Activated naive CD4-positive, alpha-beta T cell treated with anti-CD3 and anti-CD28 coated beads for 36 hours (primary cell): ENCODE measurements at regions of chr14 and their contacts with region 1.

Region 1: DNA sequence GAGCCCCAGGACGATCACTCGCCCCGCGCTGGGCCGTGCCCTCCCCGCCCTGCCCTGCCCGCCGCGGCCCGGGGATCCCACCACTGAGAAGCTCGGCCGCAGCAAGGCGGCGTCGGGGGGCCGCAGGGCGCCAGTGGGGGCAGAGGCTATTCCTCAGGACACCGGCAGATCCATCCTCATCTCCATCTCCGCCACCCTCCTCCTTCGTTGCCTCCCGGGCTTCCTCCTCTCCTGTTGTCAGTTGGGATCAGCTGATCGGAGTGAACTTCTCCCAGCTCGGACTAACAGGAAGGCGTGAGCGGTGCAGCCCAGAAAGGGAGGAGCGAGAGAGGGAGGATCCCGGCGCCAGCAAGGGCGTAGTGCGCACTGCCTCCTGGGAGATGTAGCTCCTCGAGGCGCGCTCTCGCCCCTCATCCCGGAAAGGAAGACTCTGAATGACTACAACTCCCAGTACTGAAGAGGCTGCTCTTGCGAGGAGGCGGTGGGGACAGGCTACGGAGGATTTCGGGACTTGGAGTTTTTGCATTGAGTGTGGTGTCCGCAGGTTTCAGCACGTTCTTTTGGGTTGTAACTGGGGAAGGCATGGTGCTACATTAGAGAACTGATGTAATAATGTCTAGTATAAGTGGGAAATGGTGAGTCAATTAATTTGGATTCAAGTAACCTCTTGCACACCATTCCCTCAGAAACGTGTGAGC is at the start of gene ZFYVE1:
- DNase-seq: peak; percentile 97
- H3K4me3 Mint-ChIP-seq: peak within 1 kb of the TSS; percentile 92
- H3K27ac Mint-ChIP-seq: peak within 1 kb of the TSS; percentile 80
- H3K4me1 Mint-ChIP-seq: peaks cover 39% of the 10 kb centered on the region
- H3K27me3 Mint-ChIP-seq: no peaks in the 10 kb centered on the region
- total RNA-seq, gene ZFYVE1: 8.5 to 9.2 TPM

Region 2: DNA sequence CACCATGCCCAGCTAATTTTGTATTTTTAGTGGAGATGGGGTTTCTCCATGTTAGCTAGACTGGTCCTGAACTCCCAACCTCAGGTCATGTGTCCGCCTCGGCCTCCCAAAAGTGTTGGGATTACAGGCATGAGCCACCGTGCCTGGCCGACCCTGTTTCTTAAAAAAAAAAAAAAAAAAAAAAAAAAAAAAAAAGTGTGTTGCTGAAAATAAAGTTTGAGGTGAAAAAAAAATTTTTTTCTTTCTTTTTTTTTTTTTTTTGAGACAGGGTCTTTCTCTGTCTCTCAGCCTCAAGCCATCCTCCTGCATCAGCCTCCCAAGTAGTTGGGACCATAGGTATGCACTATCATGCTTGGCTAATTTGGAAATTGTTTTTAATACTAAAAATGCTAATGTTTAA is 42.6 kb after region 1 on chr14:
- CTCF ChIA-PET with region 1: no interaction called
- intact Hi-C with region 1: no loop called
- DNase-seq: no peak
- H3K4me3 Mint-ChIP-seq: no peak overlapping the region
- H3K27ac Mint-ChIP-seq: no peak overlapping the region
- H3K4me1 Mint-ChIP-seq: peaks cover 31% of the 10 kb centered on the region
- H3K27me3 Mint-ChIP-seq: no peaks in the 10 kb centered on the region

Region 3: GRCh38 chr14:73136387-73137225 is 109.6 kb after region 1 on chr14 and contains the start of gene PSEN1:
- CTCF ChIA-PET with region 1: no interaction called
- intact Hi-C with region 1: loop called (anchors 1 kb)
- DNase-seq: peak; percentile 98
- H3K4me3 Mint-ChIP-seq: peak within 1 kb of the TSS; percentile 98
- H3K27ac Mint-ChIP-seq: peak within 1 kb of the TSS; percentile 97
- H3K4me1 Mint-ChIP-seq: peaks cover 26% of the 10 kb centered on the region
- H3K27me3 Mint-ChIP-seq: no peaks in the 10 kb centered on the region
- total RNA-seq, gene PSEN1: 24.5 to 26.0 TPM